Dendritic cell treated with granulocyte-macrophage colony-stimulating factor and Interleukin-4, amounts not matched to agents 40 ng/mL and 50 ng/mL, for 4 days (primary cell): ENCODE measurements at regions of chr14 and their contacts with region 1.

Region 1: GRCh38 chr14:96362965-96363756 is at the starts of genes ATG2B and GSKIP:
- H3K4me3 Mint-ChIP-seq: peak within 1 kb of the TSS; percentile 87
- H3K27ac Mint-ChIP-seq: peak within 1 kb of the TSS; percentile 89
- H3K4me1 Mint-ChIP-seq: peaks cover 49% of the 10 kb centered on the region
- H3K27me3 Mint-ChIP-seq: no peaks in the 10 kb centered on the region

Region 2: GRCh38 chr14:95515596-95516552 is 847.3 kb before region 1 on chr14:
- intact Hi-C with region 1: loop called (anchors 10 kb)
- H3K4me3 Mint-ChIP-seq: peak overlapping the region; percentile 82
- H3K27ac Mint-ChIP-seq: peak overlapping the region; percentile 91
- H3K4me1 Mint-ChIP-seq: peaks cover 78% of the 10 kb centered on the region
- H3K27me3 Mint-ChIP-seq: no peaks in the 10 kb centered on the region

Region 3: GRCh38 chr14:96391293-96392118 is 28.3 kb after region 1 on chr14:
- intact Hi-C with region 1: loop called (anchors 1 kb)
- H3K4me3 Mint-ChIP-seq: peak overlapping the region; percentile 84
- H3K27ac Mint-ChIP-seq: peak overlapping the region; percentile 80
- H3K4me1 Mint-ChIP-seq: peaks cover 7% of the 10 kb centered on the region
- H3K27me3 Mint-ChIP-seq: peaks cover 45% of the 10 kb centered on the region

Region 4: GRCh38 chr14:96424109-96424989 is 61.2 kb after region 1 on chr14:
- intact Hi-C with region 1: loop called (anchors 2 kb)
- H3K4me3 Mint-ChIP-seq: peak overlapping the region; percentile 63
- H3K27ac Mint-ChIP-seq: no peak overlapping the region
- H3K4me1 Mint-ChIP-seq: peaks cover 17% of the 10 kb centered on the region
- H3K27me3 Mint-ChIP-seq: peaks cover 5% of the 10 kb centered on the region

Region 5: DNA sequence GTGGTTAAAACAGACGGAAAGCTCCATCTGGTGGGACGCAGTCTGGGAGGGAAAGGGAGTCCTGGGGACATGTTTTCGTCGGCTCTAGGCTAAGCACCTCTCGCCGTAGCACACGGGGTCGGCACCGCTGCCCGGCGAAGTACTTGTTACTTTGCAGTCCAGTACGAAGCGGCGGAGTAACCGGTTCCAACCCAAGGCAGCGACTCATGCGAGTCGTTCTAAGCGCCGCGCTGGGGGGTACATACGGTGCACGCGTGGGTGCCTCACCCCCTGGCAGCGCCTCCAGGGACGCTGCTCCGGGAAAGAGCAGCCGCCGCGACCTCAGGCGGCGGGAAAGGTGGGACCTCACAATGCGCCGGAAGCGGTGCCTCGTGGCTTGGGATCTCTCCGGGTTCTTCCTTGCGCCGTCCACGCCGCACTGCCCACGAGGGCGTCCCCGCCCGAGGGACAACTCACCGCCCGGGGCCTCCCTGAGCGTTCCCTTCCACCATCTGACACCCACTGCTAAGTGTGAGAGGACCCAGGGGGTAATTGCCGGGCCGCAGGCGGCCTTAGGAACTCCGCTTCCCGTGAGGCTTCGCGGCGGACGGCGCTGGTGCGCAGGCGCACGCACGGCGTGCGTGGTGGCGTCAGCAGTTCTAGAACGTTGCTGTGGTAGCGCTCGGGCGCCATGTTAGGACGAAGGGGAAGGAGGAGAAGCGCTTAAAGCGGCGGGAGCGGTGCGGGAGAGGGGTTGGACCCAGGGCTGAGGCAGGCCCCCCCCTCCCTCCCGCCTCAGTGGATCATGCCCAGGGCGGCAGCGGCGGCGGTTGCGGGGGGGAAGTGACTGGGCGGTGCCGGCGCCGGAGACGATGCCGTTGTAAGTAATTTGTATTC is 138.8 kb after region 1 on chr14 and contains the start of gene PAPOLA:
- intact Hi-C with region 1: loop called (anchors 2 kb)
- H3K4me3 Mint-ChIP-seq: peak within 1 kb of the TSS; percentile 97
- H3K27ac Mint-ChIP-seq: peak within 1 kb of the TSS; percentile 97
- H3K4me1 Mint-ChIP-seq: peaks cover 53% of the 10 kb centered on the region
- H3K27me3 Mint-ChIP-seq: no peaks in the 10 kb centered on the region

Region 6: DNA sequence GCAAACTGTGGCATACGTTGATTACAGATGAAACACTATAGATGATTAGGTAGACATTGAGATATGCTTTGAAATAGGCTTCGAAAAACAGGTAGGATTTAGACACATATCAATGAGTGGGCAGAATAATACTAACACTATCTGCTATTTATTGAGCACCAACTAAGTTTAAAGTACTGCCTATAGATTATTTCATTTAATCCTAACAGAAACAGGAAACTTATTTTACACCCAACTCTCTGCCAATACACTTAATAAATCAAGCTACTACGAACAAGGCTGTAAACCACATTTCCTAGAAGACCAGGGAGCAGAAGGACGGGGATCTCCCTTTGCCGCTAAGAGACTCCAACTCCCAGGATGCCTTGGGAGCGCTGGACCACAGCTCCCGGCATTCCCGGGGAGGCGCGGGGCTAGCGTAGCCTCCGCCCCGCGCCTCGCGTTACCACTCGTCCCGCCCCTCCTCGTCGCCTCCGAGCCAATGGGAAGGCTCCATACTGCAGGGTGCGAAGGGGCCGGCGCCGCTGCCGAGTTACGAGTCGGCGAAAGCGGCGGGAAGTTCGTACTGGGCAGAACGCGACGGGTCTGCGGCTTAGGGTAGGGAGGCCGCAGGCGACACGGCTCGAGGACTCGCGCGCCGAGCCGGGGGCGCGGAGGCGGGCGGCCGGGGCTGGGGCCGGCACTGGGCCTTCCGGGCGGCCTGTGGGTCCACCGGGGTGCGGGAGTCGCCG is 433.9 kb after region 1 on chr14 and contains the start of gene VRK1:
- intact Hi-C with region 1: loop called (anchors 10 kb)
- H3K4me3 Mint-ChIP-seq: peak within 1 kb of the TSS; percentile 95
- H3K27ac Mint-ChIP-seq: peak within 1 kb of the TSS; percentile 84
- H3K4me1 Mint-ChIP-seq: peaks cover 32% of the 10 kb centered on the region
- H3K27me3 Mint-ChIP-seq: peaks cover 9% of the 10 kb centered on the region